ENCODE measurements at regions of chr22 and their contacts with region 1.

Region 1: DNA sequence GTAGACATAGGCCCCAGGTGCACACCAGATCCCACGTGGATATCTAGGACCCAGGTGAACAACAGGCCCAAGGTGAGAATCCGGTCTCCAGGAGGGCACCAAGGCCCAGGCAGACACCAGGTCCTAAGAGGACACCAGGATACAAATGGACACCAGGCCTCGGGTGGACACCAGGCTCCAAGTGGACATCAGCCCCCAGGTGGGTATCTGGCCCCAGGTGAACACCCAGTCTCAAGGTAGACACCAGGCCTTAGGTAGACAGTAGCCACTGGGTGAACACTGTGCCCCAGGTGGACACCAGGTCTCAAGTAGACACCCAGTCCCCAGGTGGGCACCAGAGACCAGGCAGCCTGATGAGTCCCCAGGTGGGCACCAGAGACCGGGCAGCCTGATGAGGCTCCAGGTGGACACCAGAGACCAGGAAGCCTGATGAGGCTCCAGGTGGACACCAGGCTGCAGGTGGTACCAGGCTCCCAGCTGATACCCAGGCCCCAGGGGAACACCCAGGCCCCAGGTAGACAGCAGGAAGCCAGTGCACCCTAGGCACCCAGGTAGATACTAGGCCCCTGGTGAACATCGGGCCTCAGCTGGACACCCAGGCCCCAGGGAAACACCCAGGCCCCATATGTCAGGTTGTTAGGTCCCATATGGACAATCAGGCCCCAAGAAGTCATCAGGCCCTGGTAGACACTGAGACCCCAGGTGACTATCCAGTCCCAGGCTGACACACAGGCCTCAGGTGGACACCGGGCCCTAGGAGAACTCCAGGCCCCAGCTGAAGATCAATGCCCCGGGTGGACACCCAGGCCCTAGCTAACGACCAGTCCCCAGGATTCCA is 55.1 kb upstream of the SEPTIN5 start:
- DNase-seq: no peak
- H3K4me3 ChIP-seq: no peak overlapping the region
- H3K27ac ChIP-seq: no peak overlapping the region
- H3K4me1 ChIP-seq: no peaks in the 10 kb centered on the region
- H3K27me3 ChIP-seq: no peaks in the 10 kb centered on the region
- CTCF ChIP-seq: no peak
- POLR2A ChIP-seq: no peak

Region 2: GRCh38 chr22:19240813-19241592 is 418.2 kb before region 1 on chr22:
- intact Hi-C with region 1: loop called (anchors 2 kb)
- DNase-seq: no peak
- H3K4me3 ChIP-seq: no peak overlapping the region
- H3K27ac ChIP-seq: no peak overlapping the region
- H3K4me1 ChIP-seq: no peaks in the 10 kb centered on the region
- H3K27me3 ChIP-seq: no peaks in the 10 kb centered on the region
- CTCF ChIP-seq: no peak
- POLR2A ChIP-seq: no peak

Measured in breast epithelium (tissue), 4 donors.